ENCODE measurements at regions of chr9 and their contacts with region 1.

Region 1: GRCh38 chr9:35071814-35072460 is 488 bp downstream of the VCP start:
- DNase-seq: peak; percentile 78
- ATAC-seq: peak; percentile 56
- H3K4me3 Mint-ChIP-seq: peak overlapping the region; percentile 94
- H3K27ac Mint-ChIP-seq: peak overlapping the region; percentile 94
- H3K4me1 Mint-ChIP-seq: peaks cover 56% of the 10 kb centered on the region
- H3K27me3 Mint-ChIP-seq: no peaks in the 10 kb centered on the region
- CTCF ChIP-seq: peak; percentile 40

Region 2: DNA sequence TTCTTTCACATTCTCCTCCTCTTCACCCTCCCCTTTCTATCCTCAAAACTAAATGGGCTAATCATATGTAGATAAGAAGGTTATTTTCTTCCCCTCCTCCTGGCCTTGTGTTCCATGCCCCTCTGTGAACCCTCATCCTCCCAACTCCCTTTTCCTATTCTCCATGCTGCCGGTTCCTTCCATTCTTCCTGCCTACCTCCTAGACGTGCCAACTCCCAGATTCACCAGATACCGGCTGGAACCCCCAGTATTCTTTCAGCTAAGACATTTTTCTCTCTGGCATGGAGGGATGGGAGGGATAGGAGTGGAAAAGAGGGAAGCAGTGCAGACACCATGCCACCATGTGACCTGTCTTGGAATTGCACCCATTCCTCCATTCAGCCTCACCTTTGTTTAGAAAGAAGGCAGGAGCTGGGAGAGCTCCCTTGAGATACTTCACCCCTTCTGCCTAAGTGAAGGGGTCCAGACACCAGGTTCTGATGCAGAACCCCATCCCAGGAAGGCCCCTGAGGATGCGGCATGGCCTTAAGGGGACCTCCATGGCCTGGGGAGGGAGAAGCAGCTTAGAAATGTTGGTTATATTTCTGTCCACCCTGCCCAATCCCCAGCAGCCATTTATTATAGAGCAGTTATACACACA is 77.6 kb before region 1 on chr9:
- CTCF ChIA-PET with region 1: interaction called, 3 read pairs
- POLR2A ChIA-PET with region 1: interaction called, 7 read pairs
- intact Hi-C with region 1: loop called (anchors 5 kb)
- DNase-seq: no peak
- ATAC-seq: no peak
- H3K4me3 Mint-ChIP-seq: no peak overlapping the region
- H3K27ac Mint-ChIP-seq: peak overlapping the region; percentile 86
- H3K4me1 Mint-ChIP-seq: peaks cover 53% of the 10 kb centered on the region
- H3K27me3 Mint-ChIP-seq: no peaks in the 10 kb centered on the region
- CTCF ChIP-seq: peak; percentile 62

Region 3: GRCh38 chr9:35051069-35051967 is 20.6 kb before region 1 on chr9:
- CTCF ChIA-PET with region 1: interaction called, 11 read pairs
- POLR2A ChIA-PET with region 1: interaction called, 14 read pairs
- intact Hi-C with region 1: no loop called
- DNase-seq: peak; percentile 73
- ATAC-seq: peak; percentile 80
- H3K4me3 Mint-ChIP-seq: no peak overlapping the region
- H3K27ac Mint-ChIP-seq: peak overlapping the region; percentile 49
- H3K4me1 Mint-ChIP-seq: no peaks in the 10 kb centered on the region
- H3K27me3 Mint-ChIP-seq: no peaks in the 10 kb centered on the region
- CTCF ChIP-seq: peak; percentile 79

Region 4: DNA sequence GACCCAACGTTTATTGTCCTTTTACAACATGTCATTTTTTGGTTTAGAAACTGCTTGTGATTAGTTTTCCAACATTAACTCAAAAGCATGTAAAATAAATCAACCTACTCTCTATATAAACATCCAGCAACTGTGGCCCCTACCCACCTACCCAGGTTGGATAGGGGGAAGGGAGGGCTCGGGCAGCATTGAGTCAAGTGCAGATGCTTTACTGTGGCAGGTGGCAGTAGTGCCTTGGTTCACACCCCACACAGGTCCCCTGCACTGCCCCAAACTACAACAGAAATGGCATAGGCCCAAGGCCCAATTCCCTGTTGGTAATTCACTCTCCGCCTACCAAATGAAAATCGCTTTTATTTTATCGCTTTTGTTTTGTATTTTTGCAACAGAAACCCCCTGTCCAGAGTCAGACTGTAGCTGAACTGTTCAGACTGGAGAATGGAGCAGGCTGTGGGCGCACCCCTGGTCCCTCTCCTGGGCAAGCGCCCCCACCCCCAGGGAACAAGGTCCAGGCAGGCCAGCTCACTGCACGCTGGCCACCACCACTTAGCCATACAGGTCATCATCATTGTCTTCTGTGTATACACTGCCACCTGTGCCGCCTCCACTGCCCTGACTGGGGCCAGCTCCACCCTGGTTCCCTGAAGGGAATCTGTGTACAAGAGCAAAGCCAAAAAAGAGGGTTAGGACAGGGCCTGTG is 15.2 kb before region 1 on chr9:
- CTCF ChIA-PET with region 1: interaction called, 11 read pairs
- POLR2A ChIA-PET with region 1: interaction called, 14 read pairs
- intact Hi-C with region 1: no loop called
- DNase-seq: no peak
- ATAC-seq: no peak
- H3K4me3 Mint-ChIP-seq: no peak overlapping the region
- H3K27ac Mint-ChIP-seq: no peak overlapping the region
- H3K4me1 Mint-ChIP-seq: no peaks in the 10 kb centered on the region
- H3K27me3 Mint-ChIP-seq: no peaks in the 10 kb centered on the region
- CTCF ChIP-seq: no peak

Region 5: DNA sequence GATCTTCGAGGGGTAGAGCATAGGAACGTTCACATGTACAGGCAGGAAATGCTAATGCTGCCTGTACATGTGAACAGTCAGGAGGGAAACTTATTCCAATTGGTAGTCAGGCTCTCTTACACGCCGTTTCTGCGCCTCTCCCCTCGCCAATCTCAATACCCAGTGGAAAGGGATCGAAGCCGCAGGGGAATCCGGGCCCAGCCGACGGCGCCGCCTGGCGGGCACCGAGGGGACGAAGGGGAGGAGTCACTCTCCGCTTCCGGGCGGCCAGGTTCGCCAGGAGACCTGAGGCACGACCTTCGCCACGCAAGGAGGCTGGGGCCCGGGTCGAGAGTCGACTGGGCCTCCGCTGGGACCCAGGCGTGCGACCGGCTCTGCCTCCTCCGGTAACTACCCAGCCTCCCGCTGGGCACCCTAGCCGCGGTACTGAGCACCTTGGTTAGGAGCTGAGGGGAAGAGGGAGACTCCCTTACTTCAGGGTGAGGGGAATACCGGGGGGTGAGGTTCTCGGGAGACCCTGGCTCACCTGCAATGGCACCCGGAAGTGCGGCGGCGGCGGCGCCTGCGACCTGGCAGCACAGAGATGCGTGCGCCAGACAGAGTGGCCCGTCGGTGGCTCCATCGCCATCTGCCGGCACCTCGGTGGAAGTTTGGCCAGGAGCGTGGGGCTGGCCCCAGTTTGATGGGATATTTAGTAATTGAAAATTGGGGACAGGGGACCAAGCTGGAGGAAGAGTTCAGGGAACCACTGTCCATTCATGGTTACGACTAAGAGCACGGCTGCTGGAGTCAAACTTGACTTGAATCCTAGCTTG is 24.3 kb after region 1 on chr9 and contains the start of gene PIGO:
- CTCF ChIA-PET with region 1: interaction called, 83 read pairs
- POLR2A ChIA-PET with region 1: interaction called, 101 read pairs
- intact Hi-C with region 1: no loop called
- DNase-seq: peak; percentile 93
- ATAC-seq: peak; percentile 92
- H3K4me3 Mint-ChIP-seq: peak within 1 kb of the TSS; percentile 85
- H3K27ac Mint-ChIP-seq: peak within 1 kb of the TSS; percentile 93
- H3K4me1 Mint-ChIP-seq: peaks cover 23% of the 10 kb centered on the region
- H3K27me3 Mint-ChIP-seq: no peaks in the 10 kb centered on the region
- CTCF ChIP-seq: peak; percentile 95
- total RNA-seq, gene PIGO: 19.8 to 21.9 TPM

Region 6: GRCh38 chr9:35102926-35103659 is 31.2 kb after region 1 on chr9 and contains the start of gene STOML2:
- CTCF ChIA-PET with region 1: interaction called, 83 read pairs
- POLR2A ChIA-PET with region 1: interaction called, 101 read pairs
- intact Hi-C with region 1: no loop called
- DNase-seq: peak; percentile 96
- ATAC-seq: peak; percentile 98
- H3K4me3 Mint-ChIP-seq: peak within 1 kb of the TSS; percentile 98
- H3K27ac Mint-ChIP-seq: peak within 1 kb of the TSS; percentile 97
- H3K4me1 Mint-ChIP-seq: peaks cover 22% of the 10 kb centered on the region
- H3K27me3 Mint-ChIP-seq: no peaks in the 10 kb centered on the region
- CTCF ChIP-seq: no peak
- total RNA-seq, gene STOML2: 208 to 211 TPM

Region 7: DNA sequence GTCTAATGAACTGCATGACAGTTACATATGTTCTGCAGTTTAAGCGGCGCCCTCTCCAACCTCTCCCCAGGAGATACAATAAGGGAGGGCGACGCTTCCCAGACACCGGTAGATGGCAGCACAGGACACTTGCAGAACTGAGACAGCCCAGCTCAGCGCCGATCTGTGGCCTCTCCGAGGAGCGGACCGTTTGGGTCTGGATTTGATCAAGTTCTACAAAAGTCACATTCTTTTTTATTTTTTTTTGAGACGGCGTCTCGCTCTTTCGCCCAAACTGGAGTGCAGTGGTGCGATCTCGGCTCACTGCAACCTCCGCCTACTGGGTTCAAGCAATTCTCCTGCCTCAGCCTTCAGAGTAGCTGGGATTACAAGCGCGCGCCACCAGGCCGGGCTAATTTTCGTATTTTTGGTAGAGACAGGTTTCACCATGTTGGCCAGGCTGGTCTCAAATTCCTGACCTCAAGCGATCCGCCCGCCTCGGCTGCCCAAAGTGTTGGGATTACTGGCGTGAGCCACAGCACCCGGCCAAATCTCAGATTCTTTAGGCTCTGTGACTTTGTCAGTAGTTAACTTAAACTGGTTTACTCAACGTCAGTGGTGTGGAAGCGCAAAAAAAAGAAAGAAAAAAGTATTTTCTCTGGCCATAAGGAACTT is 45.1 kb after region 1 on chr9:
- CTCF ChIA-PET with region 1: interaction called, 5 read pairs
- POLR2A ChIA-PET with region 1: interaction called, 10 read pairs
- intact Hi-C with region 1: no loop called
- DNase-seq: peak; percentile 91
- ATAC-seq: peak; percentile 51
- H3K4me3 Mint-ChIP-seq: peak overlapping the region; percentile 75
- H3K27ac Mint-ChIP-seq: peak overlapping the region; percentile 86
- H3K4me1 Mint-ChIP-seq: peaks cover 35% of the 10 kb centered on the region
- H3K27me3 Mint-ChIP-seq: no peaks in the 10 kb centered on the region
- CTCF ChIP-seq: peak; percentile 83

Region 8: GRCh38 chr9:36074870-36075532 is 1003.1 kb after region 1 on chr9:
- CTCF ChIA-PET with region 1: no interaction called
- POLR2A ChIA-PET with region 1: no interaction called
- intact Hi-C with region 1: no loop called
- DNase-seq: no peak
- ATAC-seq: no peak
- H3K4me3 Mint-ChIP-seq: no peak overlapping the region
- H3K27ac Mint-ChIP-seq: no peak overlapping the region
- H3K4me1 Mint-ChIP-seq: no peaks in the 10 kb centered on the region
- H3K27me3 Mint-ChIP-seq: no peaks in the 10 kb centered on the region
- CTCF ChIP-seq: no peak

Measured in activated CD8-positive, alpha-beta T cell treated with anti-CD3 and anti-CD28 coated beads for 36 hours (primary cell).